MCF 10A (cell line): ENCODE measurements at regions of chr20 and their contacts with region 1.

Region 1: DNA sequence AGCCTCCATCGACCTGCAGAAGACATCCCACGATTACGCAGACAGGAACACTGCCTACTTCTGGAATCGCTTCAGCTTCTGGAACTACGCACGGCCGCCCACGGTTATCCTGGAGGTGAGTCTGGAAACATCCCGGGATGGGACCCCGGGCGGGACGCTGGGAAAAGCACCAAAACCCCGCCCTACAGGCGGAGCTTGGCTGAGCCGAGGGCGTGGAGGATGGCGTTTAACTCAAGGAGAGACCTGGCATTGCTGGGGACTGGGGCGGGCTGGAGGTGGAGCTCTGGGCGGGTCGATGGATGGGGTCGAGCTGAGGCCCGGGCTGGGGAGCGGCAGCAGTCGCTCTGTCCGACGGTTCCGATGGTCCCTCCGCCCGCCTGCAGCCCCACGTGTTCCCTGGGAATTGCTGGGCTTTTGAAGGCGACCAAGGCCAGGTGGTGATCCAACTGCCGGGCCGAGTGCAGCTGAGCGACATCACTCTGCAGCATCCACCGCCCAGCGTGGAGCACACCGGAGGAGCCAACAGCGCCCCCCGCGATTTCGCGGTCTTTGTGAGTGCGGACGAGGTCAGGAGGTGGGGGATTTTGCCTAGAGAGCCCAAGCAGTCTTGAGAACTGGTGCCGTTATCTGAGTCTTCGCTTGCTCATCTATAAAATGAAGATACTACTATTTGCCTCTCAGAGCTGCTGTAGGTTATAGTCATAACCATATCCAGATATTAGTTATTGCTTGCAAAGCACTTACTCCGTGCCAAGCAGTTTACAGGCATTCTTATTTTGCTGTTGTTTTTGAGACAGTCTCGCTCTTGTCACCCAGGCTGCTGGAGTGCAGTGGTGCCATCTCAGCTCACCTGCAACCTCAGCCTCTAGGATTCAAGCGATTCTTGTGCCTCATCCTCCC is 3.8 kb downstream of the SPAG4 start:
- DNase-seq: peak; percentile 91
- H3K4me3 Mint-ChIP-seq: peak overlapping the region; percentile 87
- H3K27ac Mint-ChIP-seq: no peak overlapping the region
- H3K4me1 Mint-ChIP-seq: peaks cover 12% of the 10 kb centered on the region
- H3K27me3 Mint-ChIP-seq: no peaks in the 10 kb centered on the region
- CTCF ChIP-seq: no peak

Region 2: DNA sequence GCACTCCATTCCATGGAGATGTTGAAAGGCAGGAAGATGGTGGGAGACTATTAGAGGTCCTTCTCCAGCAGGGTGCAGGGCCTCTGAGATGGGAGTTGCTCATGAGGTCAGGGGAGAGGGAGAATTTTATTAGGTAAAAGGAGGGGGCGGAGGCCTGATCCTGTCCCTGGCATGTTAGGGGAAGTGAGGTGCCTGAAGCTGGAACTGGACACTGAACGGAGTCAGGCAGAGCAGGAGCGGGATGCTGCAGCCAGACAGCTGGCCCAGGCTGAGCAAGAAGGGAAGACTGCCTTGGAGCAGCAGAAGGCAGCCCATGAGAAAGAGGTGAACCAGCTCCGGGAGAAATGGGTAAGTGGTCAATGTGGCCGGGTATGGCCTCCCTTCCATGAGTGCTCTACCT is 139.6 kb before region 1 on chr20:
- CTCF ChIA-PET with region 1: no interaction called
- POLR2A ChIA-PET with region 1: no interaction called
- intact Hi-C with region 1: no loop called
- DNase-seq: no peak
- H3K4me3 Mint-ChIP-seq: no peak overlapping the region
- H3K27ac Mint-ChIP-seq: no peak overlapping the region
- H3K4me1 Mint-ChIP-seq: no peaks in the 10 kb centered on the region
- H3K27me3 Mint-ChIP-seq: no peaks in the 10 kb centered on the region
- CTCF ChIP-seq: no peak

Region 3: DNA sequence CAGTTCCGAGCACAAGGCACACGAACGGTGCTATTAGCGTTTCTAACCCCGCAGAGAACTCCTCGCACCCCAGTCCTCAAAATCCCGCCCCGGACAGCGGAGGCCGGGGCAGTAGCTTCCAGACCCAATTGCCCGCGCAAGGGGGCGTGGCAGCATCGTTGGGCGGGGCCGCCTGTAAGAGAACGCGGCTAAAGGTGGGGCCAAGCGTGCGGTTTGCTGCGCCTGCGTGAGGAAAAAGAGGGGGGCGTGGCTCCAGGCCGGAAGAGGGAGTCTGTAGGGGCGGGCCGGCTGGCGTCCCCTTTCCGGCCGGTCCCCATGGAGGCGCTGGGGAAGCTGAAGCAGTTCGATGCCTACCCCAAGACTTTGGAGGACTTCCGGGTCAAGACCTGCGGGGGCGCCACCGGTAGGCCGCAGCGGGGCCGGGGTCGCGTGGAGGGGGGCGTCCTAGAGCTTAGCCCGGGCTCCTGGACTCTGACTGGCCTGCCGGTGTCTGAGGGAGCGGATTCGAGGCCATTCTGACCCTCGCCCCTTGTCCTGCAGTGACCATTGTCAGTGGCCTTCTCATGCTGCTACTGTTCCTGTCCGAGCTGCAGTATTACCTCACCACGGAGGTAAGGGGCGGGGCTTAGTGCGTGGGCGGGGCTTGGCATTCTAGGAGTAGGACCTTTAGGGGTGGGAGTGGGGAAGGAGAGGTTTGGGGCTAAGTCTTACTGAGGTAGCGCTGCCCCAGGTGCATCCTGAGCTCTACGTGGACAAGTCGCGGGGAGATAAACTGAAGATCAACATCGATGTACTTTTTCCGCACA is 77.5 kb before region 1 on chr20 and contains the start of gene ERGIC3:
- CTCF ChIA-PET with region 1: interaction called, 3 read pairs
- POLR2A ChIA-PET with region 1: interaction called, 16 read pairs
- intact Hi-C with region 1: no loop called
- DNase-seq: peak; percentile 95
- H3K4me3 Mint-ChIP-seq: peak within 1 kb of the TSS; percentile 91
- H3K27ac Mint-ChIP-seq: peak within 1 kb of the TSS; percentile 91
- H3K4me1 Mint-ChIP-seq: peaks cover 7% of the 10 kb centered on the region
- H3K27me3 Mint-ChIP-seq: no peaks in the 10 kb centered on the region
- CTCF ChIP-seq: no peak
- total RNA-seq, gene ERGIC3: 222 and 260 TPM in 2 replicates

Region 4: DNA sequence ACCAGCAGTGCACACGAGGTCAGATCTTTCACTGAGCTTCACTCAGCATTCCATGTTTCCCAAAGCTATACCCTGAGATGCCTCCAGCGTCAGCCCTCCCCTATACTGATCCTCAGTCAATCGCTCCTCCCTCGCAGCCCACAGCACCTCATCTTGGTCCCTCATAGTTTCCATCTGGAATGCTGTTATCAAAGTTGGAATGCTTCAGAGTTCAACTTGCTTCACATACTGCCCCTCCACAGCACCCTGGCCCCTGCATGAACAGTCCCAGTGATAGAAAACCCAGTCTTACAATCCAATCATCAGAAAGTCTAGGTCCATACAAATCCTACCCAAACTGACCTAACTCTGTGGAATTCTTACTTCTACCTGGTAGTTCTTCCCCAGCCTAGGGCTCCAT is 16.2 kb after region 1 on chr20:
- CTCF ChIA-PET with region 1: interaction called, 10 read pairs
- POLR2A ChIA-PET with region 1: interaction called, 26 read pairs
- intact Hi-C with region 1: no loop called
- DNase-seq: no peak
- H3K4me3 Mint-ChIP-seq: no peak overlapping the region
- H3K27ac Mint-ChIP-seq: peak overlapping the region; percentile 66
- H3K4me1 Mint-ChIP-seq: peaks cover 9% of the 10 kb centered on the region
- H3K27me3 Mint-ChIP-seq: no peaks in the 10 kb centered on the region
- CTCF ChIP-seq: no peak

Region 5: DNA sequence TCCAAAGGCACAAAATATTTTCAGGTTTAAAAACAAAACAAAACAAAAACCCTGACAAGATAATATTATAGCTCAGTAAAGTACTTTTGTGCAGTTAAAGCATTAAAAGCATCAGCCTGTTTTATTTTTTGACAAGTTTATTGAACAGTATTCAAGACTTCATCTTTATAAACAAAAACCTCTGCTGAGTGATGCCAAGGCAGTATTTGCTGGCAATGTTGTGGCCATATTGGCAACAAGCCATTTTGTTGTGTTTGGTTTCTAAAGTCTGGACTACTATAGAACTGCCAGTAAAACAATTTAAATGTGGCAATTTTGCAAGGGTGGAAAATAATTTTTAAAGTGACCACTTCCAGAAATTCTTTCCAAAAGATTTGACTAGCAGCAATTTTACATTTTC is 29.4 kb after region 1 on chr20:
- CTCF ChIA-PET with region 1: interaction called, 3 read pairs
- POLR2A ChIA-PET with region 1: interaction called, 14 read pairs
- intact Hi-C with region 1: no loop called
- DNase-seq: peak; percentile 18
- H3K4me3 Mint-ChIP-seq: no peak overlapping the region
- H3K27ac Mint-ChIP-seq: no peak overlapping the region
- H3K4me1 Mint-ChIP-seq: peaks cover 11% of the 10 kb centered on the region
- H3K27me3 Mint-ChIP-seq: no peaks in the 10 kb centered on the region
- CTCF ChIP-seq: no peak

Region 6: DNA sequence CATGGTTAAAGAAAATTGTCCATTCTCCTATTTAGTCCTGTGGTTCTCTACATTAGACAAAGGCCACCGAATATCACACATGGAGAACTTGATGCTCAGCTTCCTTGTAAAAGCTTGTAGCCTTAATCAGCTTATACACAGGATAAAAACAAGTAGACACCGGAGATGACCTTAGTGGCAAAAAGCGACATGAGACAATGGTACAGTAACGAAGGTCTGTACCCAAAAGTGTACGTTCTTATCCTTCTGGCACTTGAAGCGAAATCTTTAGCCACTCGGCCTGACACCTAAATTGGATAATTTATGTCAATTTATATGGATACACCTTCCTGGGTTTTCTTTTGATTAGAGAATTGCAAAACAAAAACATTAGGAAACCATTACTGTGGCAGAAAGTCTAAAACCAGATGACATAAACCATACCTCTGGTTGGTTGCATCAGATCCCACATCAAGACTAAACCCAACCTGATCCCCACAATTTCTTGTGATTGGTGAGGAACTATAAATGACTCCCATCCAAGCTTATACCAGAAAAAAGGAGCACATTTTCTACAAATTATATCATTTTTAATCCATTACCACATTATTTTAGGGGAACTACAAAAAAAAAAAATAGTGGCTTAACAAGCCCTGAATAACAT is 116.5 kb after region 1 on chr20:
- CTCF ChIA-PET with region 1: no interaction called
- POLR2A ChIA-PET with region 1: no interaction called
- intact Hi-C with region 1: no loop called
- DNase-seq: peak; percentile 25
- H3K4me3 Mint-ChIP-seq: peak overlapping the region; percentile 44
- H3K27ac Mint-ChIP-seq: peak overlapping the region; percentile 57
- H3K4me1 Mint-ChIP-seq: peaks cover 29% of the 10 kb centered on the region
- H3K27me3 Mint-ChIP-seq: no peaks in the 10 kb centered on the region
- CTCF ChIP-seq: no peak